ENCODE measurements at regions of chr1 and their contacts with region 1.

Region 1: DNA sequence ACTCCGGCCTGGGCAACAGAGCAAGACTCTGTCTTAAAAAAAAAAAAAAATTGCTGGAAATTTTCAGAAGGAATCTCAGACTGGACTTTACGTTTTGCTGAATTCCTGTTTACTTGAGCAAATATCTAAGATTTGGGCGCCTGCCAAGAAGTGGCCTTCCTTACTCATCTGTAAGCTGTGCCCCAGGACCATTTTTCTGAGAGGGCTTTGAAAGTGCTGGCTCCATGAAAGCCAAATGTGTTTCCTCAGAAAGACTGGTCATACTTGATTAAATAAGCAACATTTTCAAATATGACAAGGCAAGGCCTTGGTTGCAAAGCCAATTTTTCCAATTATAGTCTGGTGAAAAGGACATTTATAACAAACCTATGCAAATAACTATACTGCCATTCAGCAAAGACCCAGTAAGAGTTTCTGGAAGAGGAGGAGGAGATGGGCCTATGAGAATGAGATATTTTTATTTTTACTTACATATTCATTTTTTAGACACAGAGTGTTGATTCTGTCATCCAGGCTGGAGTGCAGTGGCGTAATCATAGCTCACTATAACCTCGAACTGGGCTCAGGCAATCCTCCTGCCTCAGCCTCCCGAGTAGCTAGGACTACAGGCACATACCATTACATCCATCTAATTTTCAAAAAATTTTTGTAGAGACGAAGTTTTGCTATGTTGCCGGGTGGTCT is 56.3 kb upstream of the HTR1D start:
- DNase-seq: peak in 1 of 2 donors; percentile 7
- ATAC-seq: no peak

Region 2: DNA sequence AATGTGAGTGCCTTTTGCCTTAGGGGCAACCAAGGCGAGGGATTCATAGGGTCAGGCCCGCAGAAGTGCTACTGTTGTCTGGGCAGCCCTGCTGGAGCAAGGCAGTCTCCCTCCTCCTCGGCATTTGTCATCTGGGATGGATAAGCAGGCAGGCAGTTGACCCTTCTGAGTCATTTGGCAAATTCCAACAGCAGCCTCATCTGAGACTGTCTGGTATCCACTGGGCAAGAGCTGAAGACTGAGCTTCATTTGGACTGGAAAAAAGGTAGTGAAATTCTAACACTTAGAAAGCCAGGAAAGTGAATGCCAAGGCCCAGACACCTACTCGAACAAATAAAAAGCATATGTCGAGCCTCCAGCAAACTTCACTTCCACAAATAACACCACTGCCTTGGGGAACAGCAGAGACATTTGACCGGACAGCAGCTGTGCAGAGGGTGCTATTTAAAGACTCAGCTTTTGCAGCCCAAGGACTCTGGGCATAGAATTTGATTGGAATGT is 825.9 kb before region 1 on chr1:
- intact Hi-C with region 1: no loop called
- DNase-seq: no peak
- ATAC-seq: no peak

Region 3: GRCh38 chr1:22976461-22977243 is 296.9 kb before region 1 on chr1:
- intact Hi-C with region 1: loop called in 1 of 2 experiments (anchors 10 kb)
- DNase-seq: peak; percentile 45 to 68
- ATAC-seq: peak; percentile 96

Region 4: DNA sequence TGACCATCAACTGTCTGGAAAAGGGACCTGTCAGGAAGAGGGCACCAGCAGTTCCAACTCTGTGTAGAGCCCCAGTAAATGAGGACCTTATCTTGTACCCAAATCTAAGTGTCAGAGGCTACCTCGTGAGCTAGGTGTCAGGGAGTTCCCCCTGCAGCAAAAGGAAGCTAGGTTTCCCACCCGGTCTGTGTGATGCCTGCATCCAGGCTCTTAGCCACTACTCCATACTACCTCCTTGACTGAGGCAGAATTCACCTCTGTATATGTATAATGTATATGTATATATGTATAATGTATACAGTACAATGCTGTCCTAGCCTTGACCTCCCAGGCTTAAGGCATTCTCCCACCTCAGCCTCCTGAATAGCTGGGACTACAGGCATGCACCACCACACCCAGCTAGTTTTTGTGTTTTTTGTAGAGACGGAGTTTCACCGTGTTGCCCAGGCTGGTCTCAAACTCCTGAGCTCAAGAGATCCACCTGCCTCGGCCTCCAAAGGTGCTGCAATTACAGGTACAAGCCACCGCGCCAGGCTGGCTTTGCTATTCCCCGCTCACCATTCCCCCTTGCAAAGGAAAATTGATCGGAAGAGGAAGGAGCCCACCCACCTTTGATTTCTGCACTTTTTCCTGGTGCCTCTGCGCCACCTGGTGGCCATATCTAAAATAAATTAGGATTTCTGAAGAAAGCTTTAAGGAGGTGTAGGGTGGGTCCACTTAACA is 89.2 kb before region 1 on chr1:
- intact Hi-C with region 1: no loop called
- DNase-seq: peak in 1 of 2 donors; percentile 27
- ATAC-seq: no peak